ENCODE measurements at regions of chr9 and their contacts with region 1.

Region 1: DNA sequence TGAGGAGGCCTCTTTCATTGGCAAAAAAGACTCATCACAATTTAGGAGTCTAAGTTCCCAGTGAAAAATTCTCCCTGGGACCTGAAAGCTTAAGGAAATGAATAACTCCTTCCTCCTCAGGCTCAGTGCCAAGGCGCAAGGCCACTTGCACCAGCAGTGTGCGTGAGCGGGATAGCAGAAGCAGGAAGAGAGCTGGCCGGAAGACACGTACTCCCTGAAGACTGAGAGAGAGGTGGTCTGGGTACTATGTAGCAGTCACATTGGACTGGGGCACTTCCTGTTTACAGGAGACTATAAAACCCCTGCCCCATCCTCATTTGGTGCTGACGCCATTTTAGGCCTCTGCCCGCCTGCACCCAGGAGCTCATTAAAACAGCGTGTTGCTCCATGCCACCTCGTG is 66.3 kb upstream of the IL33 start:
- DNase-seq: peak; percentile 97
- H3K4me3 ChIP-seq: no peak overlapping the region
- H3K27ac ChIP-seq: peak overlapping the region; percentile 78
- H3K4me1 ChIP-seq: peaks cover 23% of the 10 kb centered on the region
- H3K27me3 ChIP-seq: no peaks in the 10 kb centered on the region
- CTCF ChIP-seq: no peak
- POLR2A ChIP-seq: peak; percentile 60

Region 2: DNA sequence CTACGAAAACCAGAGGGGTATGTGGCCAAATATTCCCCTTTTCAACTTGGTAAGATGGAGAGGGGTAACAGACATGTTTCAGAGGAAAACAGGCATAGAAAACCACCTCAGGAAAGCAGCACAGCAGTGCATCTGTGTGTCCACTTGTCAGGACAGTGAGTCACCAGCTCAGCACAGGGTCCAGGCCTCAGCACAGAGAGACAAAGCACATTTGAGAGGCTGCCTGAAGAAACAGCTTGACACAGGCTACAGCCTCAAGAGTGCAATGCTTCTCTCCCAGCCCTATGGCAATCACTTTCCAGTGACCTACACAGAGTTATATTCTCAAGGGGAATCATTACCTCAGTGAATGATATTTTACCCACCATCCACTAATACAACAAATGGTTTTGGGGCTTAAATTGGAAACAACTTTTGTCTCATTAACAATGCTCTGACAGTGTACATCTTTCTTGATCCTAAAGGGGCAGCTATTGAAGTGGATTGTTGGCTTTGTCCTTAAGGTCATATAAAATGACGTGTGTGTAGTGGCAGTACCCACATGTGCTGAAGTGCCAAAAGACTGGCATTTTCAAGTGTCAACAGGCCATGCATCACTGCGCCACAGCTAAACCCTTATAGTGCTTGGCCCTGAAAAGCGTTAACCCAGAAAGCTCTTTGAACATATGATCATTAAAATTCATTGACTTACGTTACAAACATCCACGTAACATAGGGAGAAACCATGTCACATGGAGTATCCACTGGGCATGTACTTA is 362.8 kb before region 1 on chr9:
- CTCF ChIA-PET with region 1: no interaction called
- POLR2A ChIA-PET with region 1: no interaction called
- dilution Hi-C with region 1: no loop called
- intact Hi-C with region 1: no loop called
- DNase-seq: peak; percentile 74
- H3K4me3 ChIP-seq: no peak overlapping the region
- H3K27ac ChIP-seq: no peak overlapping the region
- H3K4me1 ChIP-seq: peaks cover 10% of the 10 kb centered on the region
- H3K27me3 ChIP-seq: no peaks in the 10 kb centered on the region
- CTCF ChIP-seq: no peak
- POLR2A ChIP-seq: no peak

Region 3: GRCh38 chr9:6080154-6080716 is 69.1 kb before region 1 on chr9:
- CTCF ChIA-PET with region 1: no interaction called
- POLR2A ChIA-PET with region 1: no interaction called
- dilution Hi-C with region 1: no loop called
- intact Hi-C with region 1: loop called (anchors 1 kb)
- DNase-seq: peak; percentile 77
- H3K4me3 ChIP-seq: peak overlapping the region; percentile 12 to 40 (median 23)
- H3K27ac ChIP-seq: peak overlapping the region; percentile 17
- H3K4me1 ChIP-seq: no peaks in the 10 kb centered on the region
- H3K27me3 ChIP-seq: no peaks in the 10 kb centered on the region
- CTCF ChIP-seq: no peak
- POLR2A ChIP-seq: no peak

Region 4: DNA sequence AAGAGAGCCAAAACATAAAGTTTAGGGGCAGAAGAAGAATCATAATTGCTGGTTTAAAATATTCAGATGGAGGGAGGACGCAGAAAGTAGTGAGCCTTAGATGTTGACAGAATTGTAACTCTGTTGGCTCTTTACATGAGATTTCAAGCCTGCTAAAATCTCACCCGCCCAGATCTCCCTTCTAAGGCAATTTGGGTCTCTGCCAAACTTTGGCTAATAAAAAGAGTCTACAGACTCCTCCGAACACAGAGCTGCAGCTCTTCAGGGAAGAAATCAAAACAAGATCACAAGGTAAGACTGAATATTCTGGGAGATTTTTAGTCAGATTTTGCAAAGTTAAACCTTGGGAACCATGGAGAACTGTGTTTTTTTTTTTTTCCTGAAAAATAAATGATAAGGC is 66.2 kb after region 1 on chr9 and contains the start of gene IL33:
- CTCF ChIA-PET with region 1: no interaction called
- POLR2A ChIA-PET with region 1: no interaction called
- dilution Hi-C with region 1: no loop called
- intact Hi-C with region 1: loop called (anchors 5 kb)
- DNase-seq: peak; percentile 72
- H3K4me3 ChIP-seq: peak within 1 kb of the TSS in 1 of 3 experiments; percentile 42
- H3K27ac ChIP-seq: no peak within 1 kb of the TSS
- H3K4me1 ChIP-seq: peaks cover 32% of the 10 kb centered on the region
- H3K27me3 ChIP-seq: no peaks in the 10 kb centered on the region
- CTCF ChIP-seq: no peak
- POLR2A ChIP-seq: no peak
- total RNA-seq, gene IL33: 8.5 and 13.8 TPM in 2 replicates

Region 5: GRCh38 chr9:6552033-6552432 is 402.7 kb after region 1 on chr9:
- CTCF ChIA-PET with region 1: no interaction called
- POLR2A ChIA-PET with region 1: no interaction called
- dilution Hi-C with region 1: no loop called
- intact Hi-C with region 1: loop called (anchors 5 kb)
- DNase-seq: peak; percentile 92
- H3K4me3 ChIP-seq: peak overlapping the region in 1 of 3 experiments; percentile 58
- H3K27ac ChIP-seq: peak overlapping the region; percentile 99
- H3K4me1 ChIP-seq: peaks cover 42% of the 10 kb centered on the region
- H3K27me3 ChIP-seq: no peaks in the 10 kb centered on the region
- CTCF ChIP-seq: peak in 1 of 2 donors; percentile 45
- POLR2A ChIP-seq: peak; percentile 19

Measured in endothelial cell of umbilical vein (primary cell).